GM18951 (cell line): ENCODE measurements at regions of chr4 and their contacts with region 1.

Region 1: DNA sequence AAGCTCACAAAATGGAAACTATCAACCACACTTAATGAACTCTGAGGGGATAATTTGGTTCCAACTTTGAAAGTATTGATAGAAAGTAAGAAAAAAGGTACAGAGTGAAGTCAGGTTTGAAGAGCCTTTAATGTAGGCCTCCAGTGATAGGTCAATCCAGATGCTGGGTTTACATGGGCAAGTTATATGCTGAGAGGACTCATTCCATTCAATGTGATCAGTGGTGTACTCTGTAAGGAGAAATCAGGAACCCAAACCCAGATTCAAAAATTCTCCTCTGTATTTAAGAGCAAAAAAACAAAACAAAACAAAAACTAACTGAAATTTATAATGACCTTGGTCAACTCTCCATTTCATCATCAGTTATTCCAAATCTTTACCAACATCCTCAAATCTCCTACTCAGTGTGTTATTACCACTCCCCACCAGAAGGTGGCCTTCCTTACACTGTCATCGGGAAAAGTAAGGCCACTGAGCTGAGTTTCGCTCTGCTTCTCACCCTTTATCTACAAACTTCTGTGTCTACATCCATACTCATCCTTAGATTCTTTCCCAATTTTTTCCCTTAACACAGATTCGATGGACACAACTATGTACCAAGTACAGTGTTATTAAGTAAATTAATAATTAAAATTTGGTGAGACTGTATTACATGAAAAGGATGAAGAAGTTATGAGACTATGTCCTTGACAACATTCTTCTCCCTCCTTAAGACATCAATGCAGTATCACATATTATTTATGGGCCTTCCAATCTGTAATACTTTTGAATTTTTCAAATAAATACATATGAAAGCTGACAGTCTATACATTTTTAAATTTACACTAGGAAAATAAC is 88.3 kb downstream of the ZAR1 start:
- POLR2A ChIP-seq: no peak

Region 2: DNA sequence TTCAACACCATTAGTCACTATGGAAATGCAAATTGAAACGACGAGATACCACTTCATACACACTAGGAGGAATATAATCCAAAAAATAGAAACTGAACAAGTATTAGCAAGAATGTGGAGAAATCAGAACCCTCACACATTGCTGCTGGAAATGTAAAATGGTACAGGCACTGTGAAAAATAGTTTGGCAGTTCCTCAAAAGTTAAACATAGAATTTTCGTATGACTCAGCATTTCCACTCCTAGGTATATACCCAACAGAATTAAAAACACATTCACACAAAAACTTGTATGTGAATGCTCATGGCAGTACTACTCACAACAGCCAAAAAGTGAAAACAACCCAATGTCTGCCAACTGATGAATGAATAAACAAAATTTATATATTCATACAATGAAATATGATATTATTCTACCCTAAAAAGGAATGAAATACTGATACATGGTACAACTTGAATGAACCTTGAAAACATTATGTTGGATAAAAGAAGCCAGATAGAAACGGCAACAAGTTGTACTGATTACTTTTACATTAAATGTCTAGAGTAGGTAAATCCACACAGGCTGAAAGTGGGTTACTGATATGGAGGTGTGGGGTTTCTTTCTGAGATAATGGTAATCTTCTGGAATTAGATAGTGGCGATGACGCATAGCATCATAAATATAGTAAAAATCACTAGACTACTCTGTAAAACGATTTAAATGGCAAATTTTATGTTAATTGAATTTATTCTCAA is 331.0 kb before region 1 on chr4:
- in situ Hi-C with region 1: no loop called
- POLR2A ChIP-seq: no peak

Region 3: GRCh38 chr4:48963042-48963679 is 384.8 kb after region 1 on chr4:
- in situ Hi-C with region 1: loop called (anchors 10 kb)
- POLR2A ChIP-seq: no peak